Cardiac septum (tissue), 1 donor: ENCODE measurements at regions of chr3 and their contacts with region 1.

Region 1: DNA sequence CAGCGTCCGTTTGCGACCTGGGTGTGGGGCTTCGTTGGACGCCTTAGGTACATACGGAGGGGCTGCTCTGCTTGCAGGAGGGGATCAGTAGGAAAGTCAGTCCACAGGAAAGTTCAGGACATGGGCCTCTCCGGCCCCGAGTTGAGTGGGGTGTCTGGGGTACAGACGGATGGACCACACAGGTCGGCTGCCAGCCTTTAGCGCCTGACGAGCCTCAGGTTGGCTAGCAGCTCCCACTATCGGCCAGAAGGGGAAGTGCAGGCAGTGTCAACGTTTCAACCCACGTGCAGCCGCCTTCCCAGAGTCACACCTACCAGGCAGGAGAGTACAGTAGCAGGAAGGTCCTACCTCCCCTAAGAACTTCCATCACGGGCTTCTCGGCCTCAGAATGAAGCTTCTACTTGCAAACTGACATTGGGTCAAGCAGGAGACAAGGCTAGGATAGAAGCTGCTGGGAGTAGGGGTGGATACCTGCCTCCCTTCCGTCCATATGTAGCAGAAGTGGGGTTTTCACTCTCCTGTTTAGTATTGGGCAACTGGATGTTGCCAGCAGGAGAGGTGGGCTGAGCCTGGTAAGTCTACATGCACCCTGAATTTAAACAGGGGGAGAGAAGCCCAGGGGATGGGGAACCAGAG is 1.8 kb upstream of the SCN5A start:
- DNase-seq: peak; percentile 90

Region 2: GRCh38 chr3:38521391-38521987 is 129.8 kb before region 1 on chr3:
- intact Hi-C with region 1: loop called (anchors 2 kb)
- DNase-seq: no peak

Region 3: GRCh38 chr3:38579551-38580449 is 71.5 kb before region 1 on chr3:
- intact Hi-C with region 1: loop called (anchors 2 kb)
- DNase-seq: peak; percentile 78

Region 4: GRCh38 chr3:38843898-38844297 is 192.6 kb after region 1 on chr3:
- intact Hi-C with region 1: loop called (anchors 5 kb)
- DNase-seq: no peak